A549 (cell line): ENCODE measurements at regions of chr15 and their contacts with region 1.

Region 1: DNA sequence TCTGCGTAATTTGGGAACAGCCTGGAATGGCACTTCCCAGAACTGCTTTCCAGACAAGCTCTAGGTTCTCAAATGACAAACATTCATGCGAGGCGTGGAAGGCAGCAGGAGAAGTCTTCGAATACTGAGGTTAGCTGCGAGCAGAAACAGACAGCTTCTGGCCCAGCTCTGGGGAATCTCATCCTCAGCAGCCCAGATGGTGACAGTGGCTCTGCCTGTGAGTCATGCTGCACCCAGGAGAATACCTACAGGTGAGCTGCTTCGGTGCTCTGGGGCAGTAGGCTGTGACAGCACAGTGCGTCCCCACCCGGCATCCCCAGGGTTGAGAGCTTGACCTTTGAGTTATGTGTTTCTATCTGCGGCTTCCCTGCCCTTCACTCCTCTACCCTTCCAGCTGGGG is 258.6 kb downstream of the KLF13 start:
- DNase-seq: no peak
- ATAC-seq: no peak
- H3K4me3 ChIP-seq: no peak overlapping the region
- H3K27ac ChIP-seq: no peak overlapping the region
- H3K4me1 ChIP-seq: no peaks in the 10 kb centered on the region
- CTCF ChIP-seq: no peak
- EP300 ChIP-seq: no peak
- POLR2A ChIP-seq: no peak
- RAD21 ChIP-seq: no peak

Region 2: GRCh38 chr15:31499953-31500765 is 85.1 kb before region 1 on chr15:
- CTCF ChIA-PET with region 1: no interaction called
- POLR2A ChIA-PET with region 1: no interaction called
- DNase-seq: no peak
- ATAC-seq: no peak
- H3K4me3 ChIP-seq: no peak overlapping the region
- H3K27ac ChIP-seq: no peak overlapping the region
- H3K4me1 ChIP-seq: no peaks in the 10 kb centered on the region
- CTCF ChIP-seq: no peak
- EP300 ChIP-seq: no peak
- POLR2A ChIP-seq: no peak
- RAD21 ChIP-seq: no peak

Region 3: DNA sequence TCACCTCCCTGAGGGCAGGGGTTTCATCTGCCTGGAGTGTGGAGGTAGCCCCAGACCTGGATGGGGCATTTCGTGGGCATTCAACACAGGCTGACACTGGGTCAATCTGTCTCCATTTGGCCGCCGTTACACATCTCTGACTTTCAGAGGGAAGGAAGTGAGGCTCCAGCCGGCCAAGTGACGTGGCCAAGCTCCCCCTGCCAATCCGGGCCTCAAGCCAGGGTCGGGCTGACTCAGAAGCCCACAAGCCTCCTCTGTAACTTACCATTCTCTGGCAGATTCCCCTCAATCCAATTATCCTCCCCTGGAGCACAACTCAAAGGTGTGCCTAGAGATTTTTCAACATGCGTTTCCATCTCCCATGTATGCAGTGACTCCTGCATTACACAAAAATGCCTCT is 31.0 kb before region 1 on chr15:
- CTCF ChIA-PET with region 1: no interaction called
- POLR2A ChIA-PET with region 1: no interaction called
- DNase-seq: no peak
- ATAC-seq: no peak
- H3K4me3 ChIP-seq: no peak overlapping the region
- H3K27ac ChIP-seq: no peak overlapping the region
- H3K4me1 ChIP-seq: no peaks in the 10 kb centered on the region
- CTCF ChIP-seq: no peak
- EP300 ChIP-seq: no peak
- POLR2A ChIP-seq: no peak
- RAD21 ChIP-seq: no peak

Region 4: GRCh38 chr15:31571671-31572070 is 13.6 kb before region 1 on chr15:
- CTCF ChIA-PET with region 1: interaction called, 21 read pairs
- POLR2A ChIA-PET with region 1: no interaction called
- DNase-seq: peak in 1 of 2 experiments; percentile 18
- ATAC-seq: peak; percentile 68 to 87
- H3K4me3 ChIP-seq: no peak overlapping the region
- H3K27ac ChIP-seq: no peak overlapping the region
- H3K4me1 ChIP-seq: no peaks in the 10 kb centered on the region
- CTCF ChIP-seq: peak; percentile 43; the same call in 2 of the 3 replicates
- EP300 ChIP-seq: no peak
- POLR2A ChIP-seq: no peak
- RAD21 ChIP-seq: peak; percentile 50; a peak in 4 of 5 replicates